ENCODE measurements at regions of chr12 and their contacts with region 1.

Region 1: DNA sequence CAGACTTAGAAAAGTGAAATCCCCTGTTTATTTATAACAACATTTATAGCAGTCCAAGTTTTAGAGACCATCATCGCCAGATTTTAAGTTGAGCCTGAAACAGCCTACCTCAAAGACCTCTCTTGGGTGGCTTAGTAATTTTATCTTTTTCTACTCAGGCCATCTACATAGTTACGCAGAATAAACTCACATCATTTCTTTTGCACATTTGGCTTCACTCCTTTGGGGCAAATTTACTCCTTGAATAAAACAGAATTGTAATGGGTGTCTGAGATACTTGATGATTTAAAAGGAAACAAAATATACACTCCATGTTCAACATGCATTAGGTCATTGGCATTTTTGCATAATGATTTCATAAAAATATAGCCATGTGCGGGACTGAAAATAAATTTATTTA is 104.7 kb upstream of the TSPAN8 start:
- DNase-seq: no peak
- ATAC-seq: no peak
- H3K4me3 ChIP-seq: no peak overlapping the region
- H3K27ac ChIP-seq: no peak overlapping the region
- H3K4me1 ChIP-seq: no peaks in the 10 kb centered on the region
- H3K27me3 ChIP-seq: no peaks in the 10 kb centered on the region
- CTCF ChIP-seq: no peak

Region 2: DNA sequence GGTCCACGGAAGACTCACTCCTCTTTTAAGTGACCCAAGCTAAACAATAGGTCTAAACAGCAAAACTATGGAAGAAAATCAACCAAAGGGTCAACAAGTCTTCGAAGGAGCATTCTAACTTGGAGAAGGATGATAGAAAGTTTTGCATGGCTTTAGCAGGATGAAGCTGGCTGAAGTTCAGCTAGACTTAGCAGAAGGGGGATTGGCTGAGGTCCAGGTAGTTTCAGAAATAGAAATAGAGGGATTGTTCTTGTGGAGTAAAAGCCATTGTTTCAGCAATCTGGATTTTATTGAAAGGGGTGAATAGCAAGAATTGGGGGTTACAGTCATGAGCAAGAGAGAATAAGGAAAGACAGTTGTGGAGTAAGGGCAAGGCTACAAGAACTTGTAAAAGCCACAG is 20.0 kb before region 1 on chr12:
- CTCF ChIA-PET with region 1: no interaction called
- POLR2A ChIA-PET with region 1: no interaction called
- intact Hi-C with region 1: no loop called
- DNase-seq: no peak
- ATAC-seq: no peak
- H3K4me3 ChIP-seq: no peak overlapping the region
- H3K27ac ChIP-seq: no peak overlapping the region
- H3K4me1 ChIP-seq: no peaks in the 10 kb centered on the region
- H3K27me3 ChIP-seq: no peaks in the 10 kb centered on the region
- CTCF ChIP-seq: no peak

Region 3: DNA sequence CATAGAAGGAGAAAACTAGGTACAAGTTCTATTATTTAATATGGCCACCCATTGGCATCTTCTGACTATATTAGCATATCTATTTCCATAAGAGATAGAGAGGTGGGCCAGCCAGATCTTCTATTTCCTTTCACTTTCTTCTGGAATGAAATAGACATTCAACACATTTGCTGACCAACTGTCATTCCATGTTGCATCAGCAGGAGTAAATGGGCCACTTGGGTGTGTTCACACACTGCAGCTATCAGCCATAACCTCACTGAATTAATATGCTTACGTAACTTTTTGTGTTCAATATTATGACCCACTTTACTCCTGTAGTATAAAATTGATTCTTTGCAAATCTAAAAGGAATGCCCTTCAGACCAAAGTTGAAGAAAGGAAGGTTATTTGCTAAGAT is 71.0 kb after region 1 on chr12:
- CTCF ChIA-PET with region 1: no interaction called
- POLR2A ChIA-PET with region 1: no interaction called
- intact Hi-C with region 1: loop called (anchors 2 kb)
- DNase-seq: no peak
- ATAC-seq: no peak
- H3K4me3 ChIP-seq: no peak overlapping the region
- H3K27ac ChIP-seq: no peak overlapping the region
- H3K4me1 ChIP-seq: peaks cover 23% of the 10 kb centered on the region
- H3K27me3 ChIP-seq: no peaks in the 10 kb centered on the region
- CTCF ChIP-seq: no peak

Measured in PC-3 (cell line).